ENCODE measurements at regions of chr12 and their contacts with region 1.

Region 1: DNA sequence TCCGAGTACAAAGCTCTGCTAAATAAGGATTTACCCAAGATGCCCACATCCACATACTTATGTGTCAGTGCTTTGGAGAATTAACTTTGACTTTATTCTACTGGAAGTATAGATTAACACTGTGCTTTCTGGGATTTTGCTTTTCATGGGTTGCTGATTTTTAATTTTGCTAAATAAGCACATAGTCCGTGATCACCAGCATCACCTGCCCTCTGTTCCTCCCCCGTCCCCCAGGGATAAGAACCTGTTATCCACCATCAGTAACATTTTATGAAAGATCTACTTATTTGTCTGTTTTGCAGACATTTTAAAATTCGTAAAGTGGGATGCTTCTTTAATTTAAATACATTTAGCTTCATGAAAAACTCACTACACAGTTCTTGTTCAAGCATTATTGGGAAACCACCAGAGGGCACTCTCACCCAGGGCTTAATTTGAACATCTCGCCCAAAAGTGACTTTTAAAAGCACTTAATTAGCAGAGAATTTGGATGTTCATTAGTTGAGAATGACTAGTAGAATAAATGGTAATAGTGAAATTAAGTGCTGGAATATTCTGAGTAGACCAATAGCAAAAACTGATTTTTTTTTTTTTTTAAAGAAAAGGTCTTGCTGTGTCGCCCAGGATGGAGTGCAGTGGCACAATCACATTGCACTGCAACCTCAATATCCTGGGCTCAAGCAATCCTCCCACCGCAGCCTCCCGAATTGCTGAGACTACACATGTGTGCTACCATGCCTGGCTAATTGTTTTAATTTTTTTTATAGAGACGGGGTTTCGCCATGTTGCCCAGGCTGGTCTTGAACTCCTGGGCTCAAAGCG is 35.7 kb downstream of the MRPL42 start:
- DNase-seq: peak in 1 of 2 experiments; percentile 41
- H3K4me3 ChIP-seq: no peak overlapping the region
- H3K27ac ChIP-seq: no peak overlapping the region
- H3K4me1 ChIP-seq: no peaks in the 10 kb centered on the region
- H3K27me3 ChIP-seq: no peaks in the 10 kb centered on the region
- CTCF ChIP-seq: peak; percentile 92

Region 2: DNA sequence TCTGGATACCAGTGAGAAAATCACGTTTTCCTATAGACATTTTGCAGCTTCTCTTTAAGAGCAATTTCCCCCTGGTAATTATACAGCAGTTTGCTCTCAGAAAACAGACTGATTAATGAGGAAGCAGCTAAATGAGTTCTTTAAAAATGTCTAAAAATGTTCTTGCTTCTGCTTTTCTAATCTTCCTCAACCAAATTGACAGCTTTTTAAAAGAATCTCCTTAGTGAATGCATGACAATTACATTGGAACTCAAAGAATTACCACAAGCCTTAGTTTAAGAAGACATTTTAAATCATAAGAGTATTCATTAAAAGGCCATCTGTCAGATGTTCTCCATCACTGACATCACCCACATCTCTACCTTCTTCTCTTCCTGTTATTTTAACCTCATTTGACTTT is 509.6 kb after region 1 on chr12:
- CTCF ChIA-PET with region 1: no interaction called
- POLR2A ChIA-PET with region 1: interaction called, 14 read pairs
- intact Hi-C with region 1: no loop called
- DNase-seq: no peak
- H3K4me3 ChIP-seq: no peak overlapping the region
- H3K27ac ChIP-seq: no peak overlapping the region
- H3K4me1 ChIP-seq: no peaks in the 10 kb centered on the region
- H3K27me3 ChIP-seq: no peaks in the 10 kb centered on the region
- CTCF ChIP-seq: no peak